T-cell (primary cell): ENCODE measurements at regions of chr12 and their contacts with region 1.

Region 1: DNA sequence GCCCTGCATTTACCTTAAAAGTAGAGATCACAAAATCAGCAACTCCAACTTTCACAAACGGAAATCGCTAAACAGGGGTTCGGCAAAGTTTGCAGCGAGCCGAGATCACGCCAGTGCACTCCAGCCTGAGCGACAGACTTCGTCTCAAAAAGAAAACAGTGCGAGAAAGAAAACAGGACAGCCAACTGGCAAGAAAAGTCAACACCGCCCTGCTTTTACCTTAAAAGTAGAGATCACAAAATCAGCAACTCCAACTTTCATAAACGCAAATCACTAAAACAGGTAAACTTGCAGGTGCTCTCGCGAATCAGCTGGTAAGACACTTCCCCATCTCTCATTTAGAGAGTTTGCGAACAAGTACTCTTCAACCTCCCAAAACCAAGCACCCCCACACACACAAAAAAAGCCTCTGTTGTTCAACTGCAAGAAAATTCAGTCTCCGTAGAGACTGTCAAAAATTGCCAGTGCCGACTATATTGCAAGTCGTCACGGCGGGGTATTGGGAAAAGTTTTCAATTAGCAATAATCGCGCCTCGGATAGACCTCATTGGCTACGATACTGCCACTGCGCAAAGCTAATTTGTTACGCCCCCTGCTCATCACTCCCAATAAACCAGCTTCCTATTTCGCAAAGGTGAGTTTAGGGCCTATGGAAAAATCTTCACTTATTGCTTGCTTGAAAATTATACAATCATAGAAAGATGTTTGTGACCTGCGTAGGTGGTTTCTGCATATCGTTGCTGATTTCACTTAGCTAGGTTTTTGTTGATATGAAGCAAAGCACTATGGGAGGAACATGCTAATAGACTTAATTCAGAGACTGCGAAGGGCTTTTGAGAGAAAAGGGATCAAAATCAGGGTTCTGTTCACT is at the start of gene RNU4-1:
- DNase-seq: peak; percentile 49 to 88 (median 71)
- ATAC-seq: peak; percentile 38 to 53 (median 52)
- H3K4me3 ChIP-seq: peak within 1 kb of the TSS; percentile 72 to 95
- H3K4me3 Mint-ChIP-seq: no peak within 1 kb of the TSS
- H3K27ac ChIP-seq: peak within 1 kb of the TSS; percentile 100
- H3K27ac Mint-ChIP-seq: no peak within 1 kb of the TSS
- H3K4me1 ChIP-seq: peaks cover 2 to 24% of the 10 kb centered on the region in 2 experiments
- H3K4me1 Mint-ChIP-seq: peaks cover 0 to 11% (median 9%) of the 10 kb centered on the region in 3 donors
- H3K27me3 ChIP-seq: peaks cover 0 to 3% of the 10 kb centered on the region in 2 experiments
- H3K27me3 Mint-ChIP-seq: no peaks in the 10 kb centered on the region
- total RNA-seq, gene RNU4-1: 1,482 to 2,823 (median 1,909) TPM

Region 2: GRCh38 chr12:120228291-120229070 is 64.4 kb before region 1 on chr12:
- CTCF ChIA-PET with region 1: interaction called, 4 to 31 read pairs
- POLR2A ChIA-PET with region 1: interaction called, 10 read pairs
- DNase-seq: peak; percentile 71 to 93 (median 86)
- ATAC-seq: peak; percentile 71 to 85 (median 76)
- H3K4me3 ChIP-seq: peak overlapping the region; percentile 20 to 42
- H3K4me3 Mint-ChIP-seq: peak overlapping the region; percentile 4 to 73 (median 35)
- H3K27ac ChIP-seq: peak overlapping the region; percentile 71
- H3K27ac Mint-ChIP-seq: peak overlapping the region; percentile 82 to 90
- H3K4me1 ChIP-seq: peaks cover 36 to 91% of the 10 kb centered on the region in 2 experiments
- H3K4me1 Mint-ChIP-seq: peaks cover 79 to 86% (median 86%) of the 10 kb centered on the region in 3 donors
- H3K27me3 ChIP-seq: no peaks in the 10 kb centered on the region
- H3K27me3 Mint-ChIP-seq: no peaks in the 10 kb centered on the region

Region 3: DNA sequence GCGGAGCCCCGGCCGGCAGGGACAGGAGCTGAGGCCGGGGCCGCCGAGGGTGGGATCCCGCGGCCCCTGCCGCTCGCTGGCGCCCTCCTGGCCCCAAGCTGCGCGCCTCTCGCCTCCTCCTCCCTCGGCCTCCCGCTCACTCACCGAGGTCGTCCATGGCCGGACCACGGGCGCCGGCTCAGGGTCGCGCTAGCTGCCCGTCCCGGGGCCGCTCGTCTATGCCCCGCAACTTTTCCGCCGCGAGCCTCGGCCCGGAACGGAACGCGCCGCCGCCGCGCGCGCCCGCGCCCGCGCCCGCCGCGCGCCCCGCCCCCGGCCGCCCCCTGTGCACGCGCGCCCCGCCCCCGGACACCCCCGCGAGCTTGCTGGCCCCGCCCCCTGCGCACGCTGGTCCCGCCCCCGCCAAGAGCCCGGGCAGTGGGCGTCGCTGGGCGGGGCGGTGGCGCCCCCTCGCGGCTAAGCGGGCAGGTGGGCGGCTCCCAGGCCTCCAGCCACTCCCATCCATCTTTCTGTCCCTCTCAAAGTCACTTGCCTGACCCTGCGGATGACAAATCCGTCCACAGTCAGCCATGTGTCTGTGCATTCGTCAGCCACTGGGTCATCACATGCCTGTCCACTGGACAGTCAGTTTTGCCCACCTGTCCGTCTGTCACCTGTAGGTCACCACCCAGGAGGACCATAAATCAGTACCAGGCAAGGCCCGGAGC is 27.3 kb before region 1 on chr12 and contains the start of gene PXN:
- CTCF ChIA-PET with region 1: interaction called in 1 of 2 experiments, 9 read pairs
- POLR2A ChIA-PET with region 1: interaction called, 6 to 18 read pairs
- DNase-seq: peak; percentile 70 to 96 (median 88)
- ATAC-seq: peak; percentile 88 to 95 (median 89)
- H3K4me3 ChIP-seq: peak within 1 kb of the TSS; percentile 85 to 94
- H3K4me3 Mint-ChIP-seq: peak within 1 kb of the TSS; percentile 90 to 97 (median 94)
- H3K27ac ChIP-seq: peak within 1 kb of the TSS; percentile 74
- H3K27ac Mint-ChIP-seq: peak within 1 kb of the TSS; percentile 88 to 93
- H3K4me1 ChIP-seq: peaks cover 30 to 48% of the 10 kb centered on the region in 2 experiments
- H3K4me1 Mint-ChIP-seq: peaks cover 41 to 47% (median 41%) of the 10 kb centered on the region in 3 donors
- H3K27me3 ChIP-seq: no peaks in the 10 kb centered on the region
- H3K27me3 Mint-ChIP-seq: no peaks in the 10 kb centered on the region
- total RNA-seq, gene PXN: 128 to 202 (median 137) TPM

Region 4: GRCh38 chr12:120534703-120535655 is 242.1 kb after region 1 on chr12:
- CTCF ChIA-PET with region 1: no interaction called
- POLR2A ChIA-PET with region 1: no interaction called
- DNase-seq: peak in 33 of 35 experiments; percentile 17 to 65 (median 36)
- ATAC-seq: peak; percentile 51 to 61 (median 58)
- H3K4me3 ChIP-seq: peak overlapping the region; percentile 80 to 89
- H3K4me3 Mint-ChIP-seq: peak overlapping the region; percentile 91 to 97 (median 96)
- H3K27ac ChIP-seq: peak overlapping the region; percentile 56
- H3K27ac Mint-ChIP-seq: peak overlapping the region; percentile 89 to 92
- H3K4me1 ChIP-seq: peaks cover 39 to 42% of the 10 kb centered on the region in 2 experiments
- H3K4me1 Mint-ChIP-seq: peaks cover 53 to 58% (median 55%) of the 10 kb centered on the region in 3 donors
- H3K27me3 ChIP-seq: no peaks in the 10 kb centered on the region
- H3K27me3 Mint-ChIP-seq: no peaks in the 10 kb centered on the region

Region 5: GRCh38 chr12:121240484-121241101 is 947.7 kb after region 1 on chr12:
- CTCF ChIA-PET with region 1: no interaction called
- POLR2A ChIA-PET with region 1: interaction called in 1 of 2 experiments, 16 read pairs
- DNase-seq: peak; percentile 80 to 100 (median 97)
- ATAC-seq: peak; percentile 92 to 95 (median 93)
- H3K4me3 ChIP-seq: peak overlapping the region; percentile 42 to 46
- H3K4me3 Mint-ChIP-seq: peak overlapping the region; percentile 76 to 89 (median 80)
- H3K27ac ChIP-seq: peak overlapping the region; percentile 95
- H3K27ac Mint-ChIP-seq: peak overlapping the region; percentile 97 to 100
- H3K4me1 ChIP-seq: peaks cover 26 to 45% of the 10 kb centered on the region in 2 experiments
- H3K4me1 Mint-ChIP-seq: peaks cover 37 to 49% (median 40%) of the 10 kb centered on the region in 3 donors
- H3K27me3 ChIP-seq: no peaks in the 10 kb centered on the region
- H3K27me3 Mint-ChIP-seq: no peaks in the 10 kb centered on the region